Activated naive CD4-positive, alpha-beta T cell treated with anti-CD3 and anti-CD28 coated beads for 36 hours (primary cell): ENCODE measurements at regions of chr1 and their contacts with region 1.

Region 1: GRCh38 chr1:171226747-171227370 is 21.4 kb upstream of the FMO1 start:
- DNase-seq: peak; percentile 46
- H3K4me3 Mint-ChIP-seq: no peak overlapping the region
- H3K27ac Mint-ChIP-seq: no peak overlapping the region
- H3K4me1 Mint-ChIP-seq: peaks cover 1% of the 10 kb centered on the region
- H3K27me3 Mint-ChIP-seq: no peaks in the 10 kb centered on the region

Region 2: GRCh38 chr1:170967042-170967910 is 259.6 kb before region 1 on chr1:
- CTCF ChIA-PET with region 1: interaction called, 10 read pairs
- intact Hi-C with region 1: loop called (anchors 1 kb)
- DNase-seq: peak; percentile 5
- H3K4me3 Mint-ChIP-seq: no peak overlapping the region
- H3K27ac Mint-ChIP-seq: no peak overlapping the region
- H3K4me1 Mint-ChIP-seq: no peaks in the 10 kb centered on the region
- H3K27me3 Mint-ChIP-seq: peaks cover 30% of the 10 kb centered on the region

Region 3: GRCh38 chr1:171081314-171081753 is 145.5 kb before region 1 on chr1:
- CTCF ChIA-PET with region 1: interaction called, 6 read pairs
- intact Hi-C with region 1: loop called (anchors 5 kb)
- DNase-seq: no peak
- H3K4me3 Mint-ChIP-seq: no peak overlapping the region
- H3K27ac Mint-ChIP-seq: no peak overlapping the region
- H3K4me1 Mint-ChIP-seq: no peaks in the 10 kb centered on the region
- H3K27me3 Mint-ChIP-seq: peaks cover 4% of the 10 kb centered on the region

Region 4: DNA sequence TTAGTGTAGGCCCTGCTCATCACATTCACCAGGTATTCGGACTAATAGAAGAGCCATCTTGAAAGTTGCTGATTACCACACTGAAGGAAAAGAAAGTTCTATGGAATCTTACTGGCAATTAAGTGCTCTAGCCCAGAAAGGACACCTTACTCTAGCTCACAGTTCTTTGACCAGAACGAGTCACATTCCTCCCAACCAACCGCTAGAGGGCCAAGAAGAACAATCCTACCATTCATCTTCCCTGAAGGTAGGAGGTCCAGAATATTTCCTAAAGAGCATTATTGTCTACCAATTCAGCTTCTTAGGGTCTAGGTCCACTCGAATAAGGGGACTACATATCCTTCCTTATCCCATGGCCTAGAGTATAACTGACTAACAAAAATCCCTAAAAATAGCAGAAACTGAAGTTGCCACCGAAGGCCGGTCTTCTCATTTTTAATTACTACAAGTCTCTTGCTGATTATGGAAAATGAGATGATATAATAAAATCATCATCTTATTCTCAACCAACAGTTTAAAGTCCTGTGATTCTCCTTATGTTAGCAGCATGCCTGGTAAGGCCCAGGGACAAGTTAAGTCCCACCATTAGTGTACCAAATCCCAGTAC is 18.7 kb after region 1 on chr1:
- CTCF ChIA-PET with region 1: interaction called, 10 read pairs
- intact Hi-C with region 1: no loop called
- DNase-seq: peak; percentile 31
- H3K4me3 Mint-ChIP-seq: no peak overlapping the region
- H3K27ac Mint-ChIP-seq: no peak overlapping the region
- H3K4me1 Mint-ChIP-seq: no peaks in the 10 kb centered on the region
- H3K27me3 Mint-ChIP-seq: peaks cover 21% of the 10 kb centered on the region